Activated T-helper 1 cell treated with anti-CD3 and anti-CD28 coated beads, Interleukin-12 subunit alpha, Interleukin-12 subunit beta, Interleukin-2, Interleukin-4 antibody, amounts not matched to agents 30 ng/mL and 10 ng/mL and 1 ng/mL, durations not matched to agents 14 hours and 24 hours and 36 hours (primary cell): ENCODE measurements at regions of chr17 and their contacts with region 1.

Region 1: GRCh38 chr17:42248351-42249179 is 27.6 kb downstream of the STAT5B start:
- DNase-seq: peak; percentile 77
- H3K4me3 Mint-ChIP-seq: peak overlapping the region; percentile 89
- H3K27ac Mint-ChIP-seq: peak overlapping the region; percentile 99
- H3K4me1 Mint-ChIP-seq: peaks cover 61% of the 10 kb centered on the region
- H3K27me3 Mint-ChIP-seq: no peaks in the 10 kb centered on the region

Region 2: DNA sequence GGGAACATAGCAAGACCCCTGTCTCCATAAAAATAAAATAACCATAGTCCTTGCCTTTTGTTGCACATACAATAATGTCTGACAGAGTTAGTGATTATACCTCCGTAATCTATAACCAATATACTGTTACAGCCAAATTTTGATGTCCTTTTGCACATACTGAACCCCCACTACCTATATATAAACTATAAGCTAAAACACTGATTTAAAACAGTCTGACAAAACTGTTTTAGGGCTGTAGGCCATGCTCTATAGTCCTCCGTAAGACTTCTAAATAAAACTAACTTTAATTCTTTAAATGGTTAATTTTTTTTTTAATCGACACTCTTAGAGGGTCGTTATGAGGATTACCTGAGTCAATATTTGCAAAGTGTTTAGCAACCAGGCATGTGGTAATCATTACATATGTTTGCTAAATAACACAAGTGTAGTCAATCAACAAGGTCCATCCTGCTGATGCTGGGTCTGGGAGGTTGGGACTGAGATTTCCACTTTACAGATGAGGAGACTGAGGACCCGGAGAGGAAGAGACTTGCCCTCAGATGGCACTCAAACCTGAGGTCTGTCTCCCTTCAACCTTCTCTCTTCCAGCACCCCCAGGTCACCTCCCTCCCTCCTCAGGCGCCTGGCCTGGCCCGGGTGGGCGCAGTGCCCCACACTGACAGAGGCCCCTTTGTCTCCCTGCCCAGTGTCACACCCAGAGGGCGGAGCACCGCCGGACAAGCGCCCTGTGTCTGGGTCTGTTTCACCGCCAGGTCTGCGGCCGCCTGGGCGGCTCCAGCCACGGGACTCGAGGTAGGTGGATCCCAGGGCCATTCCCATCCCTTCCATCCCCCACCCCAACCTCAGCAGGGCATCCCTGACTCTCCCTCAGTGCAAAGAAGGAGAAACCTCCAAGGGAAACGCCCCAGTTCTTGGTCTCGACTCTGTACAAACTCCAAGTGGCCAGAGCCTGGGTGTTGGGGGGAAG is 160.5 kb before region 1 on chr17:
- intact Hi-C with region 1: no loop called
- DNase-seq: no peak
- H3K4me3 Mint-ChIP-seq: no peak overlapping the region
- H3K27ac Mint-ChIP-seq: no peak overlapping the region
- H3K4me1 Mint-ChIP-seq: no peaks in the 10 kb centered on the region
- H3K27me3 Mint-ChIP-seq: peaks cover 8% of the 10 kb centered on the region

Region 3: DNA sequence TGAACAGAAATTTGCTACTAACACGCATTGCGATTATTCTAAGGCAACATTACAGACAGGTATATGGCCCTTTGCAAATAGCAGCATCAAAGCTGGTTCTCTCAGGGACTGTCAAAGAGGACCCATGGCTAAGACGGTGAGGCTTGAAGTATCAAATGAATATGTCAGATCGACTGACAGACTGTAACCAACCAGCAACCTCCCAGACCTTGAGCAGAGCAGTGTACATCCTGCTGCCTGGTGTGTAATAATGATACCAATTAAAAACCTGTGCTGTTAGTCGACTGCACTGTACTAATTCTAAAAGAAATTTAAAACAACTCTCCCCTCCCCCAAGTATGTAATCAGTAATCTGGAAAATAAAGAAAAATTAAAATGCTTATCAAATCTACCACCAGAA is 18.3 kb before region 1 on chr17:
- intact Hi-C with region 1: loop called (anchors 2 kb)
- DNase-seq: no peak
- H3K4me3 Mint-ChIP-seq: no peak overlapping the region
- H3K27ac Mint-ChIP-seq: no peak overlapping the region
- H3K4me1 Mint-ChIP-seq: peaks cover 23% of the 10 kb centered on the region
- H3K27me3 Mint-ChIP-seq: no peaks in the 10 kb centered on the region

Region 4: GRCh38 chr17:42266918-42267778 is 18.6 kb after region 1 on chr17:
- intact Hi-C with region 1: loop called (anchors 1 kb)
- DNase-seq: peak; percentile 52
- H3K4me3 Mint-ChIP-seq: peak overlapping the region; percentile 73
- H3K27ac Mint-ChIP-seq: peak overlapping the region; percentile 98
- H3K4me1 Mint-ChIP-seq: peaks cover 67% of the 10 kb centered on the region
- H3K27me3 Mint-ChIP-seq: no peaks in the 10 kb centered on the region

Region 5: GRCh38 chr17:42281571-42282096 is 33.1 kb after region 1 on chr17:
- intact Hi-C with region 1: no loop called
- DNase-seq: no peak
- H3K4me3 Mint-ChIP-seq: no peak overlapping the region
- H3K27ac Mint-ChIP-seq: no peak overlapping the region
- H3K4me1 Mint-ChIP-seq: peaks cover 44% of the 10 kb centered on the region
- H3K27me3 Mint-ChIP-seq: no peaks in the 10 kb centered on the region

Region 6: DNA sequence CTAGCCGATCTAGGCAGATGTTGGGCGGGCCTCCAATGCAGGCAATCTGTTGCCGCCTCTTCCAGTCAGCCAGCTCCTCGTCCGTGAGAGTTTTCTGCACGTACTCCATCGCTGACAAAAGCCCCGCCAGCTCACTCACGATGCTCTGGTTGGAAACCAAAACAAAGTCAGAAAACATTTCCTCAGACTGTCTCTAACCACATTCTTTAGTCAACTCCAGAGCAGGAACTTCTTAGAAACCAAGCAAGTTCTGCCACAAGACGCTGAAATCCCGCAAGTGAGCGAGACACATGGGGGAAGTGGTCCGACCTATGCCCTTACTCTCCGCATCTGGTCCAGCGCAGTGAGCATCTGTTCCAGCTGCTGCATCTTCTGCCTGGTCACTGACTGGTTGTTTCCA is 88.9 kb after region 1 on chr17:
- intact Hi-C with region 1: loop called (anchors 2 kb)
- DNase-seq: peak; percentile 82
- H3K4me3 Mint-ChIP-seq: peak overlapping the region; percentile 79
- H3K27ac Mint-ChIP-seq: peak overlapping the region; percentile 97
- H3K4me1 Mint-ChIP-seq: peaks cover 76% of the 10 kb centered on the region
- H3K27me3 Mint-ChIP-seq: no peaks in the 10 kb centered on the region